ENCODE measurements at regions of chr3 and their contacts with region 1.

Region 1: DNA sequence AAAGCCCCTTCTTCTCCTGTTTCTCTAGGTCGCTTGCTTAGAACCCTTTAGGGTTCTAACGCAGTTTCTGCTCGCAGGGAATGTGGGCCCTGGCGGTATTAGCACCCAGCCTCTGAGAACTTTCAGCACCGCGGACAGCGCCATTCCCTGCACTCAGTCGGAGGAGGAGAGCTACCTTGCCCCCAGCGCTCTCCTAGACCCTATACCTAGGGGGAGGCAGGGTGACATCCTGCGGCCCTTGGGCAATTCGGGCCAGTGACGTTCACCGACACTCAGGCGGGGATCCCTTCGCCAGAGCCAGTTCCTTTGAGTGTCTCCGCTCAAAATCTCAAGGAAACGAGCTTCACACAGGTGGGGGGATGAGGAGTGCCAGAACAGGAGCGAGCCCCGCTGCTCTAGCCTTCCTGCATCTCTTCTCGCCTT is 1.3 kb downstream of the SLC7A14 start:
- DNase-seq: peak; percentile 50 to 74 (median 64)
- H3K4me3 ChIP-seq: peak overlapping the region; percentile 48 to 78 (median 67)
- H3K27ac ChIP-seq: peak overlapping the region in 43 of 59 donors; percentile 7 to 90 (median 79)
- H3K27me3 ChIP-seq: peaks cover 0 to 10% (median 0%) of the 10 kb centered on the region in 45 donors
- CTCF ChIP-seq: peak in 14 of 56 donors; percentile 4 to 26 (median 16)

Region 2: GRCh38 chr3:169619793-169620192 is 964.8 kb before region 1 on chr3:
- intact Hi-C with region 1: no loop called
- DNase-seq: no peak
- H3K4me3 ChIP-seq: no peak overlapping the region
- H3K27ac ChIP-seq: peak overlapping the region in 2 of 59 donors; percentile 40 to 64
- H3K27me3 ChIP-seq: peaks cover 0 to 34% (median 5%) of the 10 kb centered on the region in 45 donors
- CTCF ChIP-seq: peak in 2 of 56 donors; percentile 14 to 23

Region 3: DNA sequence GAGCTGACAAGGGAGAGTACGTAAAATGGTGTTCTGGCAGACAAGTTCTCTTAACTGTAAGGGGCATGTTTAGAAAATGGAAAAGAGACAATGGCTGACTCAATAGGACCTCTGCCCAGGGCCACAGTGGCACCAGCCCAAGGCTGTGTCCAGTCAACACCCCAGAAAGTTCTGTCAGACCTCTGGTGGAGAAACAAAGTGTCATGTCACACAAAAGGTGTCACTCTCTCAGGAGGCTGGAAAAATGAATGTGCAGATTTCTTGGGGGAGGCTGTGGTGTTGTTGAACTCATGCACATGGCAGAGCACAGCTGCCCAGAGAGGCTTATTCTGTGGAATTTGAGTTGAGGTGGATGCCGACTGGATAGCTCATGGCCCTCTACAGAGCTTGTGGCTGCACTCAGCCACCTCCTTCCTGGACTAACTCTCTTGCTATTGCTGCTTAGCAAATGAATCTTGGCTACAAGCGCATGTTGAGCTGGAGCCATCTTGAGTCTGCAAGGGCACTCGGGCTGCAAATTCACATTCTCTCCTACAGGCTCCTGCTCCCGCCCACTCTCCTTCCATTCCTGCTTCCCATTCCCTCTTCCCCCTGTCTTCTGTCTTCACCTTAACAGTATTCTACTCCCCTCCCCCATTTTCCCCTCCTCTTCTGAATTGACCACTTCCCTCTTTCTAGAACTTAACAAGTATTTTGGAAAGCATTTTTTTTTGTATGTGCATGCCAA is 57.1 kb after region 1 on chr3:
- intact Hi-C with region 1: loop called in 1 of 2 experiments (anchors 10 kb)
- DNase-seq: peak in 1 of 10 donors; percentile 41
- H3K4me3 ChIP-seq: no peak overlapping the region
- H3K27ac ChIP-seq: peak overlapping the region; percentile 69 to 98 (median 92)
- H3K27me3 ChIP-seq: no peaks in the 10 kb centered on the region
- CTCF ChIP-seq: no peak